Mammary epithelial cell (primary cell): ENCODE measurements at regions of chr12 and their contacts with region 1.

Region 1: GRCh38 chr12:11877869-11878780 is 192.6 kb upstream of the BCL2L14 start:
- DNase-seq: peak; percentile 92
- H3K4me3 ChIP-seq: peak overlapping the region in 1 of 3 experiments; percentile 7
- H3K27ac ChIP-seq: peak overlapping the region; percentile 80
- H3K4me1 ChIP-seq: peaks cover 55% of the 10 kb centered on the region
- H3K27me3 ChIP-seq: no peaks in the 10 kb centered on the region
- CTCF ChIP-seq: no peak

Region 2: DNA sequence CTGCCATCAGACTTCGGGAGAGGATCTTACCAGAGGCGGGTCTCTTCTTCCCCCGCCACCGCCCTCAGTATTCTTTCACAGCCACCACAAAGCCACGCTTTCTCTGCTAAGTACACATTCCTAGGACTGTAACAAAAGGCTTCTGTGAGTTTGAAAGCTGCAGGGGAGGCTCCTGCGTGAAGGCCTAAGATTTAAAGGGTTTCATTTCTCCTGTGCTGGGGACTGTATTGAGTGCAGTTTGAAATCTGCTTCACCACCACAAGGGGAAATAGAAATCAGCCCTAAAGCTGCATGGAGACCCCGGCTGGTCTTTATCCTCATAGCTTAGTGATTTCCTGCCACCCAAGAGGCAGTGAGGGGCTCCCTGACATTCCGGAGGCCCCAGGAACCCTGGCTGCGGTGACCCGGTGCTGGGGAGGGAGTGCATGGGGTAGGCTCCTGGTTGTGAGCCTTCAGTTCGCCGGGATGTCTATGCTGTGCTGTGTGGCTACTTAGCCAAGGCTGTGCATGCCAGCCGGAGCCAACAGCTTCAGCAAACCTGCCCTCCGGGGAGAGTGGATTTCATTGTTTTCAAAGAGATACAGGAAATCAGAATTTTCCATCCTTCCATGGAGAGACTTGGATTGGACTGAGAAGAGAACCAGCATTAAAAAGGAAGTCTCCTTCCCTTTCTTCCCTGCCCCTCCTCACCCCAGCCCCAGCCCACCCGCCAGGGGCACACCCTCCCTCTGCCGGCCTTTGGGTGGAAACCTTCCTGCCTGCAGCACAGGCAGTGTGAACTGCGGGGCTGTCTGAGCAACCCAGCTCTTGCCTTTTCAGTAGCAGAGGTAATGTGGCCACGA is 65.3 kb before region 1 on chr12:
- CTCF ChIA-PET with region 1: no interaction called
- dilution Hi-C with region 1: loop called (anchors 5 kb)
- in situ Hi-C with region 1: no loop called
- intact Hi-C with region 1: no loop called
- DNase-seq: peak; percentile 36
- H3K4me3 ChIP-seq: peak overlapping the region in 2 of 3 experiments; percentile 18 to 32
- H3K27ac ChIP-seq: peak overlapping the region; percentile 26
- H3K4me1 ChIP-seq: peaks cover 28% of the 10 kb centered on the region
- H3K27me3 ChIP-seq: no peaks in the 10 kb centered on the region
- CTCF ChIP-seq: peak in 1 of 2 donors; percentile 20

Region 3: GRCh38 chr12:11962860-11963259 is 84.7 kb after region 1 on chr12:
- CTCF ChIA-PET with region 1: no interaction called
- dilution Hi-C with region 1: loop called (anchors 5 kb)
- in situ Hi-C with region 1: no loop called
- intact Hi-C with region 1: no loop called
- DNase-seq: no peak
- H3K4me3 ChIP-seq: no peak overlapping the region
- H3K27ac ChIP-seq: no peak overlapping the region
- H3K4me1 ChIP-seq: peaks cover 17% of the 10 kb centered on the region
- H3K27me3 ChIP-seq: no peaks in the 10 kb centered on the region
- CTCF ChIP-seq: no peak